ENCODE measurements at regions of chr17 and their contacts with region 1.

Region 1: DNA sequence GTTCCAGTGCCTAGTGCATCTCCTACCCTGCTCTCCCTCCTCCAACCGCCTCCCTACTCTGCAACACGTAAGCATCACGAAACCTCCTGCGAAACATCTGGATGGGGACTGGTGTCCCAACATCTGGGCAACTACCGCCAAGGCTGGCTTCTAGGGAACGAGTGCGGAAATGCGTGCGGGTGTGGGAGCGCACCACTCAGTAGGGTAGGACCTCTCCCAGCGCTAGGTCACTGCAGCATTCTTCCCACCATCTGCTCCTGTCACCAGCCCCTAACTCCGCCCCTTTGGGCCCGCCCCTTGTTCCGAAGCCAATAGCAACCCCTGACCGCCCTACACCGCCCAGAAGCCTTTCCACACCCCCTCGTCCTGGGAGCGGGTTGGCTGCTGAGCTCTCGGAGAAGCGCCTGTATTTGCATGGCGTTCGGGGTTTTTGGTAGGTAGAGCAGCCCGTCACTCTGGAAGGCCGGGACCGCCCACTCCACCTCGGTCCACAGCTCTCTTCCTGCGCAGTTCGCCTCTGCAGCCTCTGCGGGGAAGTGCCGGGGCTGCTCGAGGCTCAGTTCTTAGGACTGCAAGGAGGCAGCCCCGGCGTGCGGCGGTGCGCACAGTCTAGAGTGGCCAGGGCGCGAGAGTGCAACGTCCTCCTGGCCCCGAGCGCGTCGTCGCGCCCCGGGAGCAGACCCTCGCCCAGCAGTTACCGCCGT is at the start of gene HS3ST3B1:
- DNase-seq: peak; percentile 95 to 99 (median 98)
- H3K4me3 ChIP-seq: peak within 1 kb of the TSS; percentile 34 to 73 (median 54)
- H3K4me3 Mint-ChIP-seq: peak within 1 kb of the TSS; percentile 95
- H3K27ac ChIP-seq: no peak within 1 kb of the TSS
- H3K27ac Mint-ChIP-seq: peak within 1 kb of the TSS; percentile 37 to 89 (median 78)
- H3K4me1 ChIP-seq: peaks cover 56 to 69% of the 10 kb centered on the region in 2 donors
- H3K4me1 Mint-ChIP-seq: peaks cover 65% of the 10 kb centered on the region
- H3K27me3 ChIP-seq: peaks cover 51 to 71% of the 10 kb centered on the region in 2 donors
- H3K27me3 Mint-ChIP-seq: peaks cover 73 to 84% (median 79%) of the 10 kb centered on the region in 3 donors
- CTCF ChIP-seq: no peak
- polyA plus RNA-seq, gene HS3ST3B1: 0.09 to 0.73 (median 0.32) TPM

Region 2: DNA sequence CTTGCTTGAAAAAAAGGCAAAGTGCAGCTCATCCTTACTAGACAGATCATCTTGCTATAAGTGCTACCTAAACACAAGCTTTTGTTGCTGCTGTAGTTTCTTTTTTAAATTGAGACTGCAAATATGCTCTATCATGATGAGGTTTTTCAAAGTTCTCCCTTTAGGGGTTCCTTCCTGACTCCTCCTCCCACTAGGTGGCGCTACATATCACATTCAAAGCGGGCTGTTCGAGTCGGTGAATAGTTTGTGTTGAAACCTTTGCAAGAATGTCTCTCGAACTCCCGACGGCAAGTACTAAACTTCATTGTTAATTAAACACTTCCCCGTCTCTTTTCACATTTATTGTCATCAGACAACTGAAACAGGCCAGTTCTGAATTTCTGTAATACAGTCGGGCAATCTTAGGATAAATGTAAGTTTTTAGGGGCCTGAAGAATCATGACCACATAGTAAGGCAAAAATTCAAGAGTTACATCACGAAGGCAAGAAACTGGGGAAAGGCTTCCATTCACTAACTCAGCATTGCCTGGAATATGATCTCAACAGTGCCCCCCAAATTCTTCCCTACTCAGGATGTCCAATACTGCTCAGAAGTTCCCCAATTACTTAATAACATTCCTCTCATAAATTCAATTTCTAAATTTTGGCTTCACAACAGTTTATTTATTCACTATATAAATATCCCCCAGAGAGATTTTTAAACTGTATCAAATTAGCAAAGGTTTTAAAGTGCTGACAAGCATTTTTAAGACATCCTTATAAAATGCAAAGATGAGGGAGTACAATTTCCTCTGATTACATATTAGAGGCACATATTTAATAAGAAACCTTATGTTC is 705.7 kb before region 1 on chr17:
- intact Hi-C with region 1: loop called (anchors 5 kb)
- DNase-seq: peak; percentile 53 to 66 (median 57)
- H3K4me3 ChIP-seq: no peak overlapping the region
- H3K4me3 Mint-ChIP-seq: peak overlapping the region in 1 of 2 donors; percentile 66
- H3K27ac ChIP-seq: no peak overlapping the region
- H3K27ac Mint-ChIP-seq: no peak overlapping the region
- H3K4me1 ChIP-seq: no peaks in the 10 kb centered on the region
- H3K4me1 Mint-ChIP-seq: peaks cover 17% of the 10 kb centered on the region
- H3K27me3 ChIP-seq: peaks cover 21 to 24% of the 10 kb centered on the region in 2 donors
- H3K27me3 Mint-ChIP-seq: peaks cover 24 to 29% (median 25%) of the 10 kb centered on the region in 3 donors
- CTCF ChIP-seq: peak; percentile 86

Region 3: GRCh38 chr17:14069251-14070021 is 231.3 kb before region 1 on chr17 and contains the start of gene COX10:
- intact Hi-C with region 1: loop called (anchors 5 to 10 kb)
- DNase-seq: peak; percentile 67 to 74 (median 71)
- H3K4me3 ChIP-seq: peak within 1 kb of the TSS; percentile 76 to 96 (median 83)
- H3K4me3 Mint-ChIP-seq: peak within 1 kb of the TSS; percentile 96 to 97
- H3K27ac ChIP-seq: peak within 1 kb of the TSS; percentile 60 to 94
- H3K27ac Mint-ChIP-seq: peak within 1 kb of the TSS; percentile 90 to 98 (median 96)
- H3K4me1 ChIP-seq: peaks cover 18 to 28% of the 10 kb centered on the region in 2 donors
- H3K4me1 Mint-ChIP-seq: peaks cover 29% of the 10 kb centered on the region
- H3K27me3 ChIP-seq: no peaks in the 10 kb centered on the region
- H3K27me3 Mint-ChIP-seq: no peaks in the 10 kb centered on the region
- CTCF ChIP-seq: no peak
- polyA plus RNA-seq, gene COX10: 8.2 to 15.2 (median 11.3) TPM

Region 4: GRCh38 chr17:14156689-14157088 is 144.0 kb before region 1 on chr17:
- intact Hi-C with region 1: no loop called
- DNase-seq: no peak
- H3K4me3 ChIP-seq: no peak overlapping the region
- H3K4me3 Mint-ChIP-seq: no peak overlapping the region
- H3K27ac ChIP-seq: no peak overlapping the region
- H3K27ac Mint-ChIP-seq: no peak overlapping the region
- H3K4me1 ChIP-seq: no peaks in the 10 kb centered on the region
- H3K4me1 Mint-ChIP-seq: peaks cover 6% of the 10 kb centered on the region
- H3K27me3 ChIP-seq: no peaks in the 10 kb centered on the region
- H3K27me3 Mint-ChIP-seq: no peaks in the 10 kb centered on the region
- CTCF ChIP-seq: no peak

Region 5: GRCh38 chr17:14359163-14360020 is 58.7 kb after region 1 on chr17:
- intact Hi-C with region 1: loop called in 1 of 2 experiments (anchors 5 kb)
- DNase-seq: peak; percentile 90 to 94 (median 91)
- H3K4me3 ChIP-seq: peak overlapping the region in 1 of 3 experiments; percentile 49
- H3K4me3 Mint-ChIP-seq: peak overlapping the region in 1 of 2 donors; percentile 59
- H3K27ac ChIP-seq: peak overlapping the region; percentile 49 to 82
- H3K27ac Mint-ChIP-seq: peak overlapping the region; percentile 61 to 97 (median 83)
- H3K4me1 ChIP-seq: peaks cover 25 to 27% of the 10 kb centered on the region in 2 donors
- H3K4me1 Mint-ChIP-seq: peaks cover 27% of the 10 kb centered on the region
- H3K27me3 ChIP-seq: no peaks in the 10 kb centered on the region
- H3K27me3 Mint-ChIP-seq: no peaks in the 10 kb centered on the region
- CTCF ChIP-seq: no peak

Region 6: DNA sequence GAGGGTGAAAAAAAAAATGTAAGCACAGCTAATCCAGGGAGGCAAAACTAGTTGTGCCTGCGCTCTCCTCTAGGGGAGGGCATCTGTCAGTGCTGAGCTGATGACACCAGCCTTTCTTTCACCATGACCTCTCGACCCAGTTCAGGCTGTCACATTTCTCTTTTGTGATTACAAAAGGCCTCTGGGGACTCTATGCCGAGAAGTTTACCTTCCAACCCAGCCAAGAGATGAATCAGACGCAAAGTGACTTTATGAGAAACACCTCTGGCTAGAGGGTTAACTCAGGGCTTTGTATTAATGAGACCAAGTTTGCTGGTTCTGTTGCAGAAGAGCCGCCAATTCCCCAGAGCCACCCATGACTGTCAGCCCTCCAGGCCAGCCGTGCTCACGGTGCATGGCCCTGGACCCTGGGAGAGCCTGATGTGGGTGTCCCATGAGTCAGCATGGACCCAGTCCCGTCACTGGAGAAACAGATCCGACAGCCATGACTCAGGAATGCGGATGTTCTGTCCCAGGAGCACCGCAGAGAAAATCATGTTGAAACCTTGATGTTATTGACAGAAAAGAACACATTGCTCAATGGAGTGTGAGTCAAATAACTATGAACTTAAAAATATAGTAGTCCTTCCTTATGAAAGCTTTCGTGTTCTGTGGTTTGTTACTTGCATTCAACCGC is 437.4 kb after region 1 on chr17:
- intact Hi-C with region 1: loop called (anchors 10 kb)
- DNase-seq: peak; percentile 93 to 99 (median 98)
- H3K4me3 ChIP-seq: peak overlapping the region in 2 of 3 experiments; percentile 10 to 46
- H3K4me3 Mint-ChIP-seq: peak overlapping the region; percentile 39 to 81
- H3K27ac ChIP-seq: peak overlapping the region; percentile 89 to 90
- H3K27ac Mint-ChIP-seq: peak overlapping the region; percentile 97 to 100 (median 99)
- H3K4me1 ChIP-seq: peaks cover 41 to 46% of the 10 kb centered on the region in 2 donors
- H3K4me1 Mint-ChIP-seq: peaks cover 49% of the 10 kb centered on the region
- H3K27me3 ChIP-seq: no peaks in the 10 kb centered on the region
- H3K27me3 Mint-ChIP-seq: peaks cover 0 to 3% (median 2%) of the 10 kb centered on the region in 3 donors
- CTCF ChIP-seq: peak; percentile 78

Region 7: GRCh38 chr17:14926526-14927122 is 625.9 kb after region 1 on chr17:
- intact Hi-C with region 1: loop called in 1 of 2 experiments (anchors 10 kb)
- DNase-seq: peak; percentile 44 to 58 (median 56)
- H3K4me3 ChIP-seq: no peak overlapping the region
- H3K4me3 Mint-ChIP-seq: no peak overlapping the region
- H3K27ac ChIP-seq: no peak overlapping the region
- H3K27ac Mint-ChIP-seq: no peak overlapping the region
- H3K4me1 ChIP-seq: no peaks in the 10 kb centered on the region
- H3K4me1 Mint-ChIP-seq: no peaks in the 10 kb centered on the region
- H3K27me3 ChIP-seq: no peaks in the 10 kb centered on the region
- H3K27me3 Mint-ChIP-seq: peaks cover 3 to 9% (median 5%) of the 10 kb centered on the region in 3 donors
- CTCF ChIP-seq: peak; percentile 89